Naive thymus-derived CD4-positive, alpha-beta T cell (primary cell): ENCODE measurements at regions of chr15 and their contacts with region 1.

Region 1: GRCh38 chr15:63188926-63189871 is at the start of gene RAB8B:
- DNase-seq: peak; percentile 85 to 98 (median 93)
- ATAC-seq: peak; percentile 88
- H3K4me3 ChIP-seq: peak within 1 kb of the TSS; percentile 86
- H3K4me3 Mint-ChIP-seq: peak within 1 kb of the TSS; percentile 92 to 99 (median 97)
- H3K27ac ChIP-seq: peak within 1 kb of the TSS; percentile 99
- H3K27ac Mint-ChIP-seq: peak within 1 kb of the TSS; percentile 84 to 98 (median 95)
- H3K4me1 ChIP-seq: peaks cover 22 to 40% of the 10 kb centered on the region in 2 donors
- H3K4me1 Mint-ChIP-seq: peaks cover 41 to 54% (median 50%) of the 10 kb centered on the region in 7 donors
- H3K27me3 ChIP-seq: no peaks in the 10 kb centered on the region
- H3K27me3 Mint-ChIP-seq: peaks cover 0 to 3% (median 0%) of the 10 kb centered on the region in 5 donors
- total RNA-seq, gene RAB8B: 37.2 to 100 (median 71.3) TPM

Region 2: GRCh38 chr15:63041974-63042819 is 147.0 kb before region 1 on chr15 and contains the start of gene TPM1:
- CTCF ChIA-PET with region 1: no interaction called
- POLR2A ChIA-PET with region 1: no interaction called
- intact Hi-C with region 1: no loop called
- DNase-seq: peak in 1 of 9 donors; percentile 25
- ATAC-seq: peak; percentile 22
- H3K4me3 ChIP-seq: peak within 1 kb of the TSS; percentile 8
- H3K4me3 Mint-ChIP-seq: peak within 1 kb of the TSS; percentile 51 to 81 (median 72)
- H3K27ac ChIP-seq: no peak within 1 kb of the TSS
- H3K27ac Mint-ChIP-seq: no peak within 1 kb of the TSS
- H3K4me1 ChIP-seq: peaks cover 0 to 9% of the 10 kb centered on the region in 2 donors
- H3K4me1 Mint-ChIP-seq: peaks cover 7 to 22% (median 11%) of the 10 kb centered on the region in 7 donors
- H3K27me3 ChIP-seq: peaks cover 17 to 29% of the 10 kb centered on the region in 2 donors
- H3K27me3 Mint-ChIP-seq: peaks cover 57 to 84% (median 68%) of the 10 kb centered on the region in 5 donors
- total RNA-seq, gene TPM1: 6.0 to 24.7 (median 19.2) TPM

Region 3: DNA sequence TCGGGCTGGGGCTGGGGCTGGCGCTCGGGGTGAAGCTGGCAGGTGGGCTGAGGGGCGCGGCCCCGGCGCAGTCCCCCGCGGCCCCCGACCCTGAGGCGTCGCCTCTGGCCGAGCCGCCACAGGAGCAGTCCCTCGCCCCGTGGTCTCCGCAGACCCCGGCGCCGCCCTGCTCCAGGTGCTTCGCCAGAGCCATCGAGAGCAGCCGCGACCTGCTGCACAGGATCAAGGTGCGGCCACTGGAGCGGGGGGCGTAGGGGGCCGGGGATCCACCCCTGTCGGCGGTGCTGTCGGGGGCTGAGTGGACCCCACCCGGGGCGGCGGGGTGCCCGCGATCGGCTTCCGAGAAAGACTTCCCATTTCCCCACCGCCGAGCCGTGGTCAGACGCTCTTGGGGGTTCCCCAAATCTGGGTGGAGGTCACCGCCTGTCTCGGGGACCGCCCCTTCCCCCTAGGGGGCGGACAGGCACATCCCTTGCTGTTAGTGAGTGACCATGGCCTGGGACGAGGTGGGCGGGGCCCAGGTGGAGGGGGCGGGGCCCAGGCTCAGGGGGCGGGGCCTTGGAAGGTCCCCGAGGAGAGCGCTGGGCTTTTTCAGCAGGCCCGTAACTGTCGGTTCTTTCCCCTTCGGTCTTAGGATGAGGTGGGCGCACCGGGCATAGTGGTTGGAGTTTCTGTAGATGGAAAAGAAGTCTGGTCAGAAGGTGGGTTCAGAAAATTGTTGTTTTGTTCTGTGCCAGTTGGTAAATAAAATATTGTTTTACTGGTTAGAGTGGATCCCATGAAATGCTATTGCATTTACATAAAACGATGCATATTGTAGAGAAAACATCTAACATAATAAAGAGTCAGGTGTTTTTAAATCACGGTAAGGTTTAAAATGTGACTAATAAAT is 67.0 kb before region 1 on chr15:
- CTCF ChIA-PET with region 1: no interaction called
- POLR2A ChIA-PET with region 1: no interaction called
- intact Hi-C with region 1: loop called (anchors 1 kb)
- DNase-seq: peak; percentile 38 to 91 (median 57)
- ATAC-seq: peak; percentile 95
- H3K4me3 ChIP-seq: peak overlapping the region; percentile 75
- H3K4me3 Mint-ChIP-seq: peak overlapping the region; percentile 80 to 95 (median 92)
- H3K27ac ChIP-seq: peak overlapping the region; percentile 80
- H3K27ac Mint-ChIP-seq: peak overlapping the region; percentile 54 to 95 (median 79)
- H3K4me1 ChIP-seq: peaks cover 4 to 8% of the 10 kb centered on the region in 2 donors
- H3K4me1 Mint-ChIP-seq: peaks cover 9 to 29% (median 18%) of the 10 kb centered on the region in 7 donors
- H3K27me3 ChIP-seq: no peaks in the 10 kb centered on the region
- H3K27me3 Mint-ChIP-seq: no peaks in the 10 kb centered on the region

Region 4: GRCh38 chr15:63166219-63166618 is 23.0 kb before region 1 on chr15:
- CTCF ChIA-PET with region 1: interaction called, 9 read pairs
- POLR2A ChIA-PET with region 1: interaction called, 4 read pairs
- intact Hi-C with region 1: loop called in 1 of 2 experiments (anchors 1 kb)
- DNase-seq: peak in 1 of 9 donors; percentile 13
- ATAC-seq: peak; percentile 61
- H3K4me3 ChIP-seq: no peak overlapping the region
- H3K4me3 Mint-ChIP-seq: no peak overlapping the region
- H3K27ac ChIP-seq: no peak overlapping the region
- H3K27ac Mint-ChIP-seq: peak overlapping the region in 1 of 9 donors; percentile 49
- H3K4me1 ChIP-seq: no peaks in the 10 kb centered on the region
- H3K4me1 Mint-ChIP-seq: peaks cover 0 to 6% (median 5%) of the 10 kb centered on the region in 7 donors
- H3K27me3 ChIP-seq: no peaks in the 10 kb centered on the region
- H3K27me3 Mint-ChIP-seq: peaks cover 0 to 2% (median 0%) of the 10 kb centered on the region in 5 donors

Region 5: GRCh38 chr15:63203451-63204090 is 14.4 kb after region 1 on chr15:
- CTCF ChIA-PET with region 1: interaction called, 6 read pairs
- POLR2A ChIA-PET with region 1: interaction called, 27 read pairs
- intact Hi-C with region 1: loop called in 1 of 2 experiments (anchors 1 kb)
- DNase-seq: peak in 5 of 9 donors; percentile 18 to 54 (median 40)
- ATAC-seq: peak; percentile 88
- H3K4me3 ChIP-seq: no peak overlapping the region
- H3K4me3 Mint-ChIP-seq: peak overlapping the region; percentile 3 to 65 (median 36)
- H3K27ac ChIP-seq: no peak overlapping the region
- H3K27ac Mint-ChIP-seq: peak overlapping the region in 7 of 9 donors; percentile 29 to 76 (median 59)
- H3K4me1 ChIP-seq: peaks cover 59 to 70% of the 10 kb centered on the region in 2 donors
- H3K4me1 Mint-ChIP-seq: peaks cover 70 to 98% (median 93%) of the 10 kb centered on the region in 7 donors
- H3K27me3 ChIP-seq: no peaks in the 10 kb centered on the region
- H3K27me3 Mint-ChIP-seq: no peaks in the 10 kb centered on the region

Region 6: DNA sequence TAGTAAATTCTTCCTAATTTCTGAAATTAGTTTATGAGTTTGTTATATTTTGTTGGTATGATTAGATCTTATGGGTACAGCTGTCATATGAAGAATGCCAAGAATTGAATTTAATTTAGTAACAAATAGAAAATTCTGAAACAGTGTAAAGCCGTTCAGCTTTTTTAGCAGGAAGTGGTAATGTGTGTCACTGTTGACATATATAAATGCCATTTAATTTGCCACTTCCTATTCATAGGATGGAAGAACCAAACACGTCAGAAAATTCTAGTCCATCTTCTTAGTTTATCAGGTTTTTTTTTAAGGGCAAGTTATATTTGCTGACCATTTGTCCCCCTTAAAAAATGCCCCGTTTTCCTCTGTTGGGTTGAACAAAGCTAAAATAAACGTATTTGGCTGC is 43.2 kb after region 1 on chr15:
- CTCF ChIA-PET with region 1: interaction called, 8 read pairs
- POLR2A ChIA-PET with region 1: interaction called, 18 read pairs
- intact Hi-C with region 1: loop called (anchors 1 to 2 kb)
- DNase-seq: peak in 7 of 9 donors; percentile 21 to 55 (median 40)
- ATAC-seq: peak; percentile 78
- H3K4me3 ChIP-seq: no peak overlapping the region
- H3K4me3 Mint-ChIP-seq: peak overlapping the region in 9 of 10 donors; percentile 1 to 73 (median 59)
- H3K27ac ChIP-seq: peak overlapping the region; percentile 52
- H3K27ac Mint-ChIP-seq: peak overlapping the region; percentile 70 to 92 (median 86)
- H3K4me1 ChIP-seq: peaks cover 13 to 32% of the 10 kb centered on the region in 2 donors
- H3K4me1 Mint-ChIP-seq: peaks cover 22 to 91% (median 86%) of the 10 kb centered on the region in 7 donors
- H3K27me3 ChIP-seq: no peaks in the 10 kb centered on the region
- H3K27me3 Mint-ChIP-seq: no peaks in the 10 kb centered on the region

Region 7: GRCh38 chr15:63277038-63277892 is 88.1 kb after region 1 on chr15 and contains the start of gene APH1B:
- CTCF ChIA-PET with region 1: interaction called, 8 read pairs
- POLR2A ChIA-PET with region 1: interaction called, 52 read pairs
- intact Hi-C with region 1: loop called (anchors 1 kb)
- DNase-seq: peak; percentile 62 to 80 (median 74)
- ATAC-seq: peak; percentile 92
- H3K4me3 ChIP-seq: peak within 1 kb of the TSS; percentile 71
- H3K4me3 Mint-ChIP-seq: peak within 1 kb of the TSS; percentile 78 to 93 (median 89)
- H3K27ac ChIP-seq: peak within 1 kb of the TSS; percentile 96
- H3K27ac Mint-ChIP-seq: peak within 1 kb of the TSS; percentile 75 to 98 (median 86)
- H3K4me1 ChIP-seq: peaks cover 10 to 21% of the 10 kb centered on the region in 2 donors
- H3K4me1 Mint-ChIP-seq: peaks cover 23 to 49% (median 46%) of the 10 kb centered on the region in 7 donors
- H3K27me3 ChIP-seq: no peaks in the 10 kb centered on the region
- H3K27me3 Mint-ChIP-seq: no peaks in the 10 kb centered on the region
- total RNA-seq, gene APH1B: 9.9 to 29.9 (median 17.6) TPM

Region 8: GRCh38 chr15:64305261-64305660 is 1116.1 kb after region 1 on chr15:
- CTCF ChIA-PET with region 1: no interaction called
- POLR2A ChIA-PET with region 1: no interaction called
- intact Hi-C with region 1: loop called in 1 of 2 experiments (anchors 5 kb)
- DNase-seq: no peak
- ATAC-seq: no peak
- H3K4me3 ChIP-seq: no peak overlapping the region
- H3K4me3 Mint-ChIP-seq: no peak overlapping the region
- H3K27ac ChIP-seq: no peak overlapping the region
- H3K27ac Mint-ChIP-seq: peak overlapping the region in 1 of 9 donors; percentile 50
- H3K4me1 ChIP-seq: no peaks in the 10 kb centered on the region
- H3K4me1 Mint-ChIP-seq: peaks cover 0 to 25% (median 14%) of the 10 kb centered on the region in 7 donors
- H3K27me3 ChIP-seq: no peaks in the 10 kb centered on the region
- H3K27me3 Mint-ChIP-seq: no peaks in the 10 kb centered on the region